Heart right ventricle (tissue), 16 donors: ENCODE measurements at regions of chr4 and their contacts with region 1.

Region 1: GRCh38 chr4:93897559-93897958 is 69.0 kb downstream of the ATOH1 start:
- DNase-seq: no peak
- ATAC-seq: no peak
- H3K4me3 ChIP-seq: no peak overlapping the region
- H3K27ac ChIP-seq: no peak overlapping the region
- H3K4me1 ChIP-seq: no peaks in the 10 kb centered on the region
- H3K27me3 ChIP-seq: no peaks in the 10 kb centered on the region
- CTCF ChIP-seq: peak in 6 of 9 donors; percentile 16 to 41 (median 24)

Region 2: GRCh38 chr4:94127707-94128328 is 230.3 kb after region 1 on chr4:
- intact Hi-C with region 1: loop called in 1 of 10 experiments (anchors 10 kb)
- DNase-seq: no peak
- ATAC-seq: no peak
- H3K4me3 ChIP-seq: no peak overlapping the region
- H3K27ac ChIP-seq: no peak overlapping the region
- H3K4me1 ChIP-seq: no peaks in the 10 kb centered on the region
- H3K27me3 ChIP-seq: peaks cover 0 to 6% (median 0%) of the 10 kb centered on the region in 7 donors
- CTCF ChIP-seq: peak in 8 of 9 donors; percentile 14 to 61 (median 56)

Region 3: GRCh38 chr4:94214703-94215319 is 317.3 kb after region 1 on chr4:
- intact Hi-C with region 1: no loop called
- DNase-seq: no peak
- ATAC-seq: no peak
- H3K4me3 ChIP-seq: no peak overlapping the region
- H3K27ac ChIP-seq: no peak overlapping the region
- H3K4me1 ChIP-seq: peaks cover 0 to 7% (median 2%) of the 10 kb centered on the region in 9 donors
- H3K27me3 ChIP-seq: no peaks in the 10 kb centered on the region
- CTCF ChIP-seq: no peak